ENCODE measurements at regions of chr2 and their contacts with region 1.

Region 1: GRCh38 chr2:157838442-157839161 is 37.5 kb downstream of the ACVR1 start:
- DNase-seq: peak; percentile 69 to 91 (median 78)
- ATAC-seq: peak; percentile 96
- H3K4me3 ChIP-seq: peak overlapping the region; percentile 30
- H3K27ac ChIP-seq: peak overlapping the region; percentile 93
- H3K4me1 ChIP-seq: peaks cover 14 to 50% of the 10 kb centered on the region in 2 experiments
- H3K27me3 ChIP-seq: no peaks in the 10 kb centered on the region
- CTCF ChIP-seq: no peak
- EP300 ChIP-seq: peak; percentile 86
- POLR2A ChIP-seq: peak; percentile 75
- RAD21 ChIP-seq: peak in 1 of 2 experiments; percentile 11; a peak in 1 of 4 replicates

Region 2: DNA sequence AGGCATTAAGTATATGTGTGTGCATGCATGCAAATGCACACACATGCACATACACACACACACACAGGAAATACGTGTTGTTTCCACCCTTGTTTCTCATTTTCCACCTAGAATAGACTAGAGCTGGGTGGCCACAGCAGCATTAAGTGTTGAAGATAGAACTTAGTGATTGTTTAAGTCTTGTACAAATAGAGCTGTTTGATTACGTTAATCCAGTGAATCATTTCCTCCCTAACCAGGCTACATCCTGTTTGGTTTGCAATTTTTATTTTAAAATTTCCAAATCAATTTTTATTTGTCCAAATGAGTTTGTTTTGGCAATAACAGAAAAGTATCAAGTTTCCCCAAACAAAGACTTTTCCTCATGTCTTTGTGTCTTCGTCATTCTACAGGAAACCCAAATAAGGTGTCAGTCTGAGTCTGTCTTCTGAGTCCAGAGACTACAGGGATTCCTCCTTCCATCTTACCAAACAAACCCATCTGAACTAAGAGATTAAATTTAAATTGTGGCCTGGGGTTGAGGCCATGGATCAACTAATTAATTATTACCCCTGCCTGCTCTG is 655.7 kb before region 1 on chr2:
- CTCF ChIA-PET with region 1: no interaction called
- POLR2A ChIA-PET with region 1: no interaction called
- in situ Hi-C with region 1: no loop called
- intact Hi-C with region 1: no loop called
- DNase-seq: peak in 1 of 4 experiments; percentile 32
- ATAC-seq: peak; percentile 52
- H3K4me3 ChIP-seq: no peak overlapping the region
- H3K27ac ChIP-seq: peak overlapping the region; percentile 72
- H3K4me1 ChIP-seq: peaks cover 3 to 20% of the 10 kb centered on the region in 2 experiments; a peak in 4 of 5 replicates
- H3K27me3 ChIP-seq: no peaks in the 10 kb centered on the region
- CTCF ChIP-seq: no peak
- EP300 ChIP-seq: no peak
- POLR2A ChIP-seq: no peak
- RAD21 ChIP-seq: no peak

Region 3: GRCh38 chr2:157572725-157573124 is 265.9 kb before region 1 on chr2:
- CTCF ChIA-PET with region 1: no interaction called
- POLR2A ChIA-PET with region 1: no interaction called
- in situ Hi-C with region 1: no loop called
- intact Hi-C with region 1: no loop called
- DNase-seq: peak in 2 of 4 experiments; percentile 20 to 26
- ATAC-seq: peak; percentile 84
- H3K4me3 ChIP-seq: no peak overlapping the region
- H3K27ac ChIP-seq: no peak overlapping the region
- H3K4me1 ChIP-seq: no peaks in the 10 kb centered on the region
- H3K27me3 ChIP-seq: no peaks in the 10 kb centered on the region; a peak in 1 of 5 replicates
- CTCF ChIP-seq: peak; percentile 39 to 45 (median 41); a peak in 3 of 6 replicates
- EP300 ChIP-seq: no peak
- POLR2A ChIP-seq: no peak
- RAD21 ChIP-seq: no peak; a peak in 1 of 4 replicates

Region 4: DNA sequence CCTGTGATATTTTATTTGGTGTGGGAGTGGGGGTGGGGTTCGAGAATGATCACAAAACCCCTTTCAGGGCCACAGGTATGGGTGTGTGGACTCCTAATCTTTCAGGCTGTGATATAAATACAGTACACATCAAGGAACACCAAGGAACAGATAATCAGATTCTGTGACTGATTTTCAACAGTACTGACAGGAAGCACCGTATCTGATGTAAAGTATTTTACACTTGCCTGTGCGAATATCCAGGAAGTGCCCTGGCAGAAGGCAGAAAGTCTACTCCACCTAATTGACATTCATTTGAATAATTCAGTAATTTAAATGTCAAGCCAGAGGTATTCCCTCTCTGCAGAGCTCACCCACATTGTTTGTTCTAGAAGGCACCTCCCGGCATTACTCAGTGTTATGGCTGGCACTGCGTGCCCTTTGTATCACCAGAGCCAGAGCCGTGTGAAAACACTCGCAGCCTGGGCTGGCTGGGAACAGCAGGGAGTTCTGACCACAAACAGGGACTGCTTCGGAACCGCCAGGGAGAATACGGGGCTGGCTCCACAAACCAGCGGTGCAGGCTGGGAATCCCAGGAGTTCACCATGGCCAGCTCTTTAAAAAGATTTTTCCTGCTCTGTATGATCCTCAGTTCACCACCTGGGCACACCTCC is 54.3 kb before region 1 on chr2:
- CTCF ChIA-PET with region 1: no interaction called
- POLR2A ChIA-PET with region 1: no interaction called
- in situ Hi-C with region 1: no loop called
- intact Hi-C with region 1: loop called (anchors 1 kb)
- DNase-seq: peak in 2 of 4 experiments; percentile 24 to 29
- ATAC-seq: no peak
- H3K4me3 ChIP-seq: no peak overlapping the region
- H3K27ac ChIP-seq: peak overlapping the region; percentile 37; the same call in 2 of the 3 replicates
- H3K4me1 ChIP-seq: peaks cover 22 to 66% of the 10 kb centered on the region in 2 experiments
- H3K27me3 ChIP-seq: no peaks in the 10 kb centered on the region
- CTCF ChIP-seq: no peak
- EP300 ChIP-seq: peak; percentile 76
- POLR2A ChIP-seq: no peak
- RAD21 ChIP-seq: 0 out of 4 replicates have a peak, but pooled peaks of 1 of the 2 experiments have one; percentile 3

Region 5: DNA sequence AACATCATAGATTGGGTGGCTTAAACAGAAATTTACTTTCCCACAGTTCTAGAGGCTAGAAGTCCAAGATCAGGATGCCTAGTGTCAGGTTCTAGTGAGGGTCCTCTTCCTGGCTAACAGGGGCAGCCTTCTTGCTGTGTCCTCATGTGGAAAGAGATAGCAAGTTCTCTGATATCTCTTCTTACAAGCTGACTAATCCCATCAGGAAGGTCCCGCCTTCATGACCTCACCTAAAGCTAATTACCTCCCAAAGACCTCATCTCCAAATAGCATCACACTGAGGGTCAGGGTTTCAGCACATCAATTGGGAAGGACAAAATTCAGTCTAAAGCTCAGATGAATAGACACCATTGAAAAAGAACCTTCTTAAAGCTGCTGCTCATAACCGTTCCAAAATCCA is 14.6 kb after region 1 on chr2:
- CTCF ChIA-PET with region 1: no interaction called
- POLR2A ChIA-PET with region 1: interaction called, 15 read pairs
- in situ Hi-C with region 1: no loop called
- intact Hi-C with region 1: no loop called
- DNase-seq: peak in 1 of 4 experiments; percentile 54
- ATAC-seq: peak; percentile 58
- H3K4me3 ChIP-seq: no peak overlapping the region
- H3K27ac ChIP-seq: no peak overlapping the region
- H3K4me1 ChIP-seq: peaks cover 0 to 18% of the 10 kb centered on the region in 2 experiments; a peak in 2 of 5 replicates
- H3K27me3 ChIP-seq: no peaks in the 10 kb centered on the region
- CTCF ChIP-seq: no peak
- EP300 ChIP-seq: no peak; the same call in 1 of the 2 replicates
- POLR2A ChIP-seq: no peak
- RAD21 ChIP-seq: no peak